Calu3 (cell line): ENCODE measurements at regions of chr17 and their contacts with region 1.

Region 1: GRCh38 chr17:66301797-66302741 is at the start of gene PRKCA:
- DNase-seq: peak; percentile 85
- H3K4me3 Mint-ChIP-seq: peak within 1 kb of the TSS; percentile 85
- H3K27ac Mint-ChIP-seq: peak within 1 kb of the TSS; percentile 91
- H3K4me1 Mint-ChIP-seq: peaks cover 30% of the 10 kb centered on the region
- H3K27me3 Mint-ChIP-seq: no peaks in the 10 kb centered on the region
- CTCF ChIP-seq: no peak
- total RNA-seq, gene PRKCA: 126 TPM in 2 replicates

Region 2: GRCh38 chr17:66135896-66136295 is 166.2 kb before region 1 on chr17:
- CTCF ChIA-PET with region 1: no interaction called
- intact Hi-C with region 1: no loop called
- DNase-seq: no peak
- H3K4me3 Mint-ChIP-seq: no peak overlapping the region
- H3K27ac Mint-ChIP-seq: no peak overlapping the region
- H3K4me1 Mint-ChIP-seq: no peaks in the 10 kb centered on the region
- H3K27me3 Mint-ChIP-seq: no peaks in the 10 kb centered on the region
- CTCF ChIP-seq: no peak

Region 3: DNA sequence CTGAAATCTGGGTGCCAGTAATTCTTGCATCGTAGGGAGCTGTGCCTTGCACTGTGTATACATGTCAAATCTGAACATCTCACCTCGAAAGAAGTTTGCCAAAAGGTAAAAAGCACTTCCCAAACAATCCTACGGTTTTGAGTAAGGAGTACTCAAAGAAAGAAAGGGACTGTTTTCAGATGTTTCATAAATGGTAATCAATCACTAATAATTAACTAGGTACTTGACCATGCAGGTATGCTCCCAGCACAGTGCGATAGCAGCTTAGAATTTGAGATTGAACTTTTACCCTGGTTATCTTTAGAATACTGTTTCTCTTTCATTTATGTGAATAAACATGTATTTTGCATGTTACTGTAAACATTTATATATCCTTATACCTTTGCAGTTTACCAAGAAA is 39.4 kb after region 1 on chr17:
- CTCF ChIA-PET with region 1: interaction called, 4 read pairs
- intact Hi-C with region 1: loop called (anchors 2 kb)
- DNase-seq: no peak
- H3K4me3 Mint-ChIP-seq: peak overlapping the region; percentile 48
- H3K27ac Mint-ChIP-seq: peak overlapping the region; percentile 33
- H3K4me1 Mint-ChIP-seq: peaks cover 77% of the 10 kb centered on the region
- H3K27me3 Mint-ChIP-seq: no peaks in the 10 kb centered on the region
- CTCF ChIP-seq: no peak

Region 4: GRCh38 chr17:66351053-66351452 is 49.0 kb after region 1 on chr17:
- CTCF ChIA-PET with region 1: interaction called, 3 read pairs
- intact Hi-C with region 1: loop called (anchors 2 kb)
- DNase-seq: peak; percentile 80
- H3K4me3 Mint-ChIP-seq: peak overlapping the region; percentile 49
- H3K27ac Mint-ChIP-seq: peak overlapping the region; percentile 87
- H3K4me1 Mint-ChIP-seq: peaks cover 81% of the 10 kb centered on the region
- H3K27me3 Mint-ChIP-seq: no peaks in the 10 kb centered on the region
- CTCF ChIP-seq: no peak

Region 5: DNA sequence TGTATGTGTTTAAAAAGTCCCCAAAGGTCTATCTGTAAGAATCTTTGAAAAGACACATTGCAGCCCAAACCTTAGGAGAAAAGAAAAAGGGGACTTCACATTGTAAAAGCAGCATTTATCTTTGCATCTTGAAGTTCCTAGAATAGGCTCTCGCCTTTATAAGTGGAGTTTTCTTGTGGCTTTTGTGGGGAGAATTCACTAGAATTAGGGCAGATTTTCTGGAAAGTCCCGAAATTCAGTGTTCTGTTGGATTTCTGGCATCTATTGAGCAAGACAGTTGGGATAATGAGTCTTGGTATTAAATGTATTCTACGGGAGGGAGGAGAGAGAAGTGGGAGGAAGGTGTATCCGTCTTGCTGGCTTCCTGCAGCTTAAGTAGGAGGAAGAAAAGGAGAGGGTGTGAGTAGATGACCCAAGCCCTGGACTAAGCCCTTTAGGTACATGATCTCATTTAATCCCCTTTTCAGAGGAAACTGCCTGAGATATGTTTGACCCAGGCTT is 63.0 kb after region 1 on chr17:
- CTCF ChIA-PET with region 1: no interaction called
- intact Hi-C with region 1: loop called (anchors 5 kb)
- DNase-seq: no peak
- H3K4me3 Mint-ChIP-seq: no peak overlapping the region
- H3K27ac Mint-ChIP-seq: peak overlapping the region; percentile 62
- H3K4me1 Mint-ChIP-seq: peaks cover 66% of the 10 kb centered on the region
- H3K27me3 Mint-ChIP-seq: no peaks in the 10 kb centered on the region
- CTCF ChIP-seq: no peak

Region 6: GRCh38 chr17:66386498-66387365 is 84.7 kb after region 1 on chr17:
- CTCF ChIA-PET with region 1: interaction called, 4 read pairs
- intact Hi-C with region 1: loop called (anchors 2 kb)
- DNase-seq: peak; percentile 69
- H3K4me3 Mint-ChIP-seq: peak overlapping the region; percentile 59
- H3K27ac Mint-ChIP-seq: peak overlapping the region; percentile 98
- H3K4me1 Mint-ChIP-seq: peaks cover 63% of the 10 kb centered on the region
- H3K27me3 Mint-ChIP-seq: no peaks in the 10 kb centered on the region
- CTCF ChIP-seq: no peak